ENCODE measurements at regions of chr1 and their contacts with region 1.

Region 1: GRCh38 chr1:151189638-151190445 is at the start of gene VPS72:
- DNase-seq: peak; percentile 89
- H3K4me3 ChIP-seq: peak within 1 kb of the TSS; percentile 66 to 83
- H3K27ac ChIP-seq: peak within 1 kb of the TSS; percentile 85 to 88
- H3K4me1 ChIP-seq: peaks cover 0 to 6% of the 10 kb centered on the region in 2 experiments; a peak in 1 of 4 replicates
- H3K27me3 ChIP-seq: no peaks in the 10 kb centered on the region
- CTCF ChIP-seq: no peak
- EP300 ChIP-seq: peak in 1 of 2 experiments; percentile 23; a peak in 2 of 4 replicates
- RAD21 ChIP-seq: no peak
- polyA plus RNA-seq, gene VPS72: 80.2 and 104 TPM in 2 replicates

Region 2: DNA sequence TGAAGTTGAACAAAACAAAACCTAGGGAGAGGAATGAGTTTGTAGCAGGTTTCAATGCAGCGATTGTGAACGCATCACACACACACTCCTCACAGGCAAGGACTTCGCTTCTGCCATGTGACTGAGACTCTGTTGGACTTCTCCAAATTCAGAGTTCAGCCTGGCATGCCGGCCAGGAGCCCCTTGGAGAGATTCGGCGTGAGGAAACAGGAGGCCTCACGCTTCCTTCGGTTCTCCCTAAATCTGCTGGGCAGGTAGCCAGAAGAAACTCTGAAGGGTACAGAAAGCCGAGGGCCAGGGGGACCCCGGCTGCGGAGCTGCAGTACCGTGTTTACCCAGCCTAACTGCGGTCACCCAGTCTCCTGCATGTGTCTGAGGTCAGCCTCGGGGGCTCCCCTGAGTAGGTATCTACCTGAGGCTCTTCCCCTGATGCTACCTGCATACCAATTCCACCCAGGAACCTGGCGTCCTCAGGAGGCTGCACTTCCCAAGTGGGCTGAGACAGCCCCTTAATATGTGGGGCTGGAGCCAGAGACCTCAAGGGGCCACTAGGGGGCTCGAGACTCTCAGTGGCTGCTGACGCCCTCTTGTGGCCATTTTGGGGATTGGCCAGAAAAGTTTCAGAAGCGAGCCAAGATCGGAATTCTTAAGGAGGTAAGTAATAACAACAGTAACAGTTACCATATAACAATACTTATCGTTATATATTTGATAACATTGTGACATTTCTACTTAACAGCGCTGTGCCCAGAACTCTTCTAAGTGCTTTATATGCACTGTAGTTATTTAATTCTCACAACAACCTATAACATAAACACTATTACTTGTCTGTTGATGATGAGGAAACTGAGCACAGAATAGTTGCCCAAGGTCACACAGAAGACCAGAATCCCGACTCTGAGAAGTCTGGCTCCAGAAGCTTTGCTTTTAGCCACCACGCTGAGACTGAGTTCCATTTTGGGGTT is 210.5 kb before region 1 on chr1:
- CTCF ChIA-PET with region 1: no interaction called
- POLR2A ChIA-PET with region 1: no interaction called
- DNase-seq: peak; percentile 92
- H3K4me3 ChIP-seq: peak overlapping the region in 1 of 2 experiments; percentile 39; a peak in 1 of 4 replicates
- H3K27ac ChIP-seq: peak overlapping the region; percentile 35 to 60; a peak in 2 of 4 replicates
- H3K4me1 ChIP-seq: peaks cover 23 to 28% of the 10 kb centered on the region in 2 experiments
- H3K27me3 ChIP-seq: no peaks in the 10 kb centered on the region
- CTCF ChIP-seq: peak; percentile 100
- EP300 ChIP-seq: no peak
- RAD21 ChIP-seq: peak; percentile 76

Region 3: GRCh38 chr1:151145304-151146071 is 44.4 kb before region 1 on chr1:
- CTCF ChIA-PET with region 1: no interaction called
- POLR2A ChIA-PET with region 1: no interaction called
- DNase-seq: peak; percentile 64
- H3K4me3 ChIP-seq: peak overlapping the region; percentile 70 to 91
- H3K27ac ChIP-seq: no peak overlapping the region; a peak in 1 of 4 replicates
- H3K4me1 ChIP-seq: peaks cover 0 to 21% of the 10 kb centered on the region in 2 experiments; a peak in 1 of 4 replicates
- H3K27me3 ChIP-seq: no peaks in the 10 kb centered on the region
- CTCF ChIP-seq: no peak
- EP300 ChIP-seq: no peak
- RAD21 ChIP-seq: no peak

Region 4: GRCh38 chr1:151175910-151176309 is 13.9 kb before region 1 on chr1 and contains the start of gene TMOD4:
- CTCF ChIA-PET with region 1: interaction called, 21 read pairs
- POLR2A ChIA-PET with region 1: interaction called, 8 read pairs
- DNase-seq: peak; percentile 67
- H3K4me3 ChIP-seq: no peak within 1 kb of the TSS
- H3K27ac ChIP-seq: no peak within 1 kb of the TSS
- H3K4me1 ChIP-seq: no peaks in the 10 kb centered on the region
- H3K27me3 ChIP-seq: no peaks in the 10 kb centered on the region
- CTCF ChIP-seq: peak; percentile 64
- EP300 ChIP-seq: no peak
- RAD21 ChIP-seq: no peak
- polyA plus RNA-seq, gene TMOD4: 0.57 and 0.59 TPM in 2 replicates

Region 5: GRCh38 chr1:151222130-151222529 is 32.3 kb after region 1 on chr1:
- CTCF ChIA-PET with region 1: no interaction called
- POLR2A ChIA-PET with region 1: no interaction called
- DNase-seq: no peak
- H3K4me3 ChIP-seq: no peak overlapping the region
- H3K27ac ChIP-seq: no peak overlapping the region; a peak in 1 of 4 replicates
- H3K4me1 ChIP-seq: peaks cover 0 to 10% of the 10 kb centered on the region in 2 experiments; a peak in 2 of 4 replicates
- H3K27me3 ChIP-seq: no peaks in the 10 kb centered on the region
- CTCF ChIP-seq: no peak
- EP300 ChIP-seq: no peak
- RAD21 ChIP-seq: no peak

Region 6: DNA sequence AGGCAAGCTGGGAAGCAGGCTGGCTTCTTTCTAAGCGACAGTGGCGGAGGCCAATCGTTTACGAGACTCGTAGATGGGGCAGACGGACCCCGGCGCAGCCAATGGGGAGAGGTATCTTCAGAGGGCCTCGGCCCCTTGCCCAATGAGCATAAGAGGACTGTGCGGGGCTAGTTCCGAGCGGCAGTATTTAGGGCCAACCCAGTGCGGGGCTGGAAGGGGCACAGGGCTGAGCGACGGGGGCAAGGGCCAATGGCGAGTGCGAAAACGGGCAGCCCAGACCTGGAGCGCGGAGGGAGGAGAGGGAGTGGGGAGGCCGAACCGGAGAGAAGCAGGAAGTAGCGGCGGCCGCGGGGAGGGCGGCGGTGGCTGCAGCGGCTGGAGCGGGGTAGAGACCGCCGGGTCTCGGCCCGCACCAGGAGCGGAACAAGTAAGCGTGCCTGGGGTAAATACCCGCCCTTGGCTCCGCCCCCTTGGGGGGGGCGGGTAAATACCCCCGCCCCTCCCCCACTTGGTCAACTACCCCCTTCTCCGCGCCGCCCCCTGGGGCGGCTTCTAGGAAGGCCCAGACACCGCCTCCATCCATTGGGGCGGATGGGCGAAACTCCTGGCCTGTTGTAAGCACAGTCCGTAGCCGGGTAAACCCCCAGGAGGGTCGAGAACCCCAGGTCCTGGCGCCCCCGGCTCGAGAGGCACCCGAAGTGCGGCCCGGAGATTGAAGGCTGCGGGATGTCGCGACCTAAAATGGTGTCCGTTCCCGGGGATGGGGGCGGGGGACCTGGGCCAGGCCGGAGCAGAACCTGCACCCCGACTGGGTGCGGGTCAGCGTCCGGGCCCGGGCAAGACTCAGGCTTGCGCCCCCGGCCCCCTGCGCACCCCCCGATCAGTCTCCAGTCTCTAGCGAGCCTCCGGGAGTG is 92.4 kb after region 1 on chr1 and contains the start of gene ZNF687:
- CTCF ChIA-PET with region 1: no interaction called
- POLR2A ChIA-PET with region 1: interaction called, 10 read pairs
- DNase-seq: peak; percentile 97
- H3K4me3 ChIP-seq: peak within 1 kb of the TSS; percentile 70 to 86
- H3K27ac ChIP-seq: peak within 1 kb of the TSS; percentile 98 to 100
- H3K4me1 ChIP-seq: peaks cover 0 to 14% of the 10 kb centered on the region in 2 experiments; a peak in 1 of 4 replicates
- H3K27me3 ChIP-seq: no peaks in the 10 kb centered on the region
- CTCF ChIP-seq: no peak
- EP300 ChIP-seq: no peak
- RAD21 ChIP-seq: no peak
- polyA plus RNA-seq, gene ZNF687: 14.6 and 15.8 TPM in 2 replicates